ENCODE measurements at regions of chr19 and their contacts with region 1.

Region 1: GRCh38 chr19:46600384-46601317 is 479 bp upstream of the CALM3 start:
- DNase-seq: peak; percentile 98 to 99 (median 99)
- H3K4me3 ChIP-seq: peak overlapping the region; percentile 100
- H3K27ac ChIP-seq: peak overlapping the region; percentile 97 to 98
- H3K4me1 ChIP-seq: peaks cover 15% of the 10 kb centered on the region
- H3K27me3 ChIP-seq: no peaks in the 10 kb centered on the region
- CTCF ChIP-seq: peak in 2 of 3 donors; percentile 15
- EP300 ChIP-seq: no peak
- POLR2A ChIP-seq: no peak

Region 2: DNA sequence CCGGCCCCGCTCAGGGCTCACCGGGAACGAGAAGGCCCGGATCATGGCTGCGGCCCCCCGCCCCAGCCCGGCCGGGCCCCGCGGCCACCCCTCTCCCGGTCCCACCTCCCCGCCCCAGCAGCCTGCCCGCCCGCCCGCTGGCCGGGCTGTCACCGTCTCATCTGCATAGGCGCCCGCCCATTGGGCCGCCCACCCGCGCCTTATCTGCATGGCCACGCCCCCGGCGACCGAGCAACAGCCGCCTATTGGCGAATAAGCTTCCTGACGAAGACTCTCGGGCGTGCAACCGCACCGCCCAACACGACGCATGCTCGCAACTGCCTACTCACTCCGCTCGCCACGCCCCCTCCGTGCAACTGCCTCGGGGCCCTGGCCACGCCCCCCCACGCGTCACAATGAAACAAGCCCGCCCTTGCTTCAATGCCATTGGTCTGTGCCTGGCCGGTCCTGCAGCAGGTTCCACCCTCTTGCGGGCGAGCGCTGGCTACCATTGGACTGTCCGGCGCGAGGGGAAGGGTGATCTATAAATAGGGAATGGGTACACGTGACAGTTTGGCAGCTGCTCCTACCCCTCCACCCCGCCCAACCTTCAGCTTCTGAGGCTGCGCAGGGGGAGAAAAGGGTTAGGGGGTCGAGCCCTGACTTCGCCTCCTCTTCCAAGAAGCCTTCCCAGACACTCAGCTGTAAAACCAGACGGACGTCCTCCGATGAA is 60.5 kb after region 1 on chr19 and contains the start of gene DACT3:
- intact Hi-C with region 1: loop called in 1 of 4 experiments (anchors 10 kb)
- DNase-seq: peak; percentile 100
- H3K4me3 ChIP-seq: peak within 1 kb of the TSS; percentile 87
- H3K27ac ChIP-seq: peak within 1 kb of the TSS; percentile 61 to 75
- H3K4me1 ChIP-seq: no peaks in the 10 kb centered on the region
- H3K27me3 ChIP-seq: no peaks in the 10 kb centered on the region
- CTCF ChIP-seq: peak in 1 of 3 donors; percentile 20
- EP300 ChIP-seq: peak; percentile 46
- POLR2A ChIP-seq: no peak
- total RNA-seq, gene DACT3: 7.6 to 56.5 (median 20.8) TPM

Region 3: GRCh38 chr19:46746281-46747013 is 145.8 kb after region 1 on chr19 and contains the start of gene STRN4:
- intact Hi-C with region 1: loop called in 1 of 4 experiments (anchors 10 kb)
- DNase-seq: peak; percentile 52 to 79 (median 66)
- H3K4me3 ChIP-seq: peak within 1 kb of the TSS; percentile 95
- H3K27ac ChIP-seq: peak within 1 kb of the TSS; percentile 83 to 93
- H3K4me1 ChIP-seq: peaks cover 11% of the 10 kb centered on the region
- H3K27me3 ChIP-seq: no peaks in the 10 kb centered on the region
- CTCF ChIP-seq: no peak
- EP300 ChIP-seq: no peak
- POLR2A ChIP-seq: no peak
- total RNA-seq, gene STRN4: 37.3 to 85.3 (median 59.1) TPM

Region 4: DNA sequence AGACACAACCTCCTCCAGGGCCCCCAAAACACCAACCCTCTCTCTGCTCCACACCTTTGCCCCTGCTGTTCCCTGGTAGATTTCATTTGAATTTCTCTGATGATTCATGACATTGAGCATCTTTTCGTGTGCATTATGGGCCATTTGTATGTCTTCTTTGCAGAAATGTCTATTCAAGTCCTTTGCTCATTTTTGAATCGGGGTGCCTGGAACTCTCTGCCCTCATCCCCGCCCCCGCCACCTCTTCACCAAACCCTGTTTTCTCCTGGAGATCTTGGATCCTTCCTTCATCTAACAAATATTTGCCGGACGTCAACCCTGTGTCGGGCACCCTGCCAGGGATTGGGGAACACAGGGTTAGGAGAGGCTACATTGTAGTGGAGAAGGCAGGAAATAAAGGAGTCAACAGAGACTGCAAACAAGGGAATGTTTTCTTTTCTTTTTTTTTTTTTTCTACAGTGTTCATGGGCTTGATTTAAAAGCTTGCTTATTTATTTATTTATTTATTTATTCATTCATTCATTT is 213.2 kb after region 1 on chr19:
- intact Hi-C with region 1: no loop called
- DNase-seq: peak; percentile 87 to 96 (median 90)
- H3K4me3 ChIP-seq: no peak overlapping the region
- H3K27ac ChIP-seq: peak overlapping the region; percentile 52 to 77
- H3K4me1 ChIP-seq: peaks cover 5% of the 10 kb centered on the region
- H3K27me3 ChIP-seq: no peaks in the 10 kb centered on the region
- CTCF ChIP-seq: no peak
- EP300 ChIP-seq: no peak
- POLR2A ChIP-seq: no peak